CD4-positive, alpha-beta memory T cell (primary cell): ENCODE measurements at regions of chr16 and their contacts with region 1.

Region 1: GRCh38 chr16:25257504-25257955 is at the start of gene ZKSCAN2:
- DNase-seq: peak; percentile 76 to 83 (median 80)
- H3K4me3 ChIP-seq: peak within 1 kb of the TSS; percentile 80 to 84
- H3K4me3 Mint-ChIP-seq: peak within 1 kb of the TSS; percentile 93 to 98 (median 96)
- H3K27ac ChIP-seq: peak within 1 kb of the TSS; percentile 84
- H3K27ac Mint-ChIP-seq: peak within 1 kb of the TSS; percentile 96 to 98 (median 97)
- H3K4me1 ChIP-seq: peaks cover 44% of the 10 kb centered on the region
- H3K4me1 Mint-ChIP-seq: peaks cover 41 to 68% (median 55%) of the 10 kb centered on the region in 4 donors
- H3K27me3 ChIP-seq: no peaks in the 10 kb centered on the region
- H3K27me3 Mint-ChIP-seq: no peaks in the 10 kb centered on the region
- total RNA-seq, gene ZKSCAN2: 3.6 to 4.1 TPM

Region 2: DNA sequence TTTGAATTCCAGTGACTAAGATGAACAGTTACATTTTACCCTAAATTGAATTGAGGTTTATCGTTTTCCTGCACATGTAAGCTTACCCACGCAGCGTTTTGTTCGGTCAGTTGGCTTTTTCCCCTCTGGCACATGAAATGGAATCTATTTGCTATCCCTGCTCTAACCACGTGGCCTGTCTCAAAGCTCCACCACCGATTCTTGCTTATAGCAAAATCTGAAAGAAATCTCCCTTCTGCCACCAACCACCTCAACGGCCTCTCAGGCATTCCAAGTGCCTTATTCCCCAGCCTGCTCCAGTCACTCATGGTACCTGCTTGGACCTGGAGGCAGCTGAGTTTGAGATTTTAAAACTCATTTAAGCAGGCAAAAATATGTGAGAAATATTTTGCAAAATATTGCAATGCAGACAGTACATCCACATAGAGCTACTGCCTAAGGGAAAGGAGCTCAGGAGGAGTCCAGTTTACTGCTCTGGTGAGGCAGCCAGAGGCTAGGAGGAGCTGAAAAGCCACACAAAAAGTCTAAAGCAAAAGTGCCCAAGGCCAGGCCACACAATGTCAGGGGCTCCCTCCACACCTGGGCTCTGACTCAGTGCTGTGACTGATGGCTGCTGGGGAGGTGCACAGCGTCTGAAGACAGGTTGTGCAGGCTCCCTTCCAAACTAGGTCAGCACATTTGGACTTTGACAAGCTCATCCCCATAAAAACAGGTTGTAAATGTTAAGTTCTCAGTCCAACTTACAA is 268.8 kb before region 1 on chr16:
- CTCF ChIA-PET with region 1: no interaction called
- POLR2A ChIA-PET with region 1: no interaction called
- intact Hi-C with region 1: no loop called
- DNase-seq: no peak
- H3K4me3 ChIP-seq: no peak overlapping the region
- H3K4me3 Mint-ChIP-seq: no peak overlapping the region
- H3K27ac ChIP-seq: no peak overlapping the region
- H3K27ac Mint-ChIP-seq: peak overlapping the region in 2 of 7 donors; percentile 30 to 57
- H3K4me1 ChIP-seq: peaks cover 42% of the 10 kb centered on the region
- H3K4me1 Mint-ChIP-seq: peaks cover 46 to 76% (median 65%) of the 10 kb centered on the region in 4 donors
- H3K27me3 ChIP-seq: no peaks in the 10 kb centered on the region
- H3K27me3 Mint-ChIP-seq: no peaks in the 10 kb centered on the region

Region 3: GRCh38 chr16:25270577-25270976 is 13.0 kb after region 1 on chr16:
- CTCF ChIA-PET with region 1: interaction called, 13 read pairs
- POLR2A ChIA-PET with region 1: interaction called, 6 read pairs
- intact Hi-C with region 1: no loop called
- DNase-seq: no peak
- H3K4me3 ChIP-seq: no peak overlapping the region
- H3K4me3 Mint-ChIP-seq: no peak overlapping the region
- H3K27ac ChIP-seq: no peak overlapping the region
- H3K27ac Mint-ChIP-seq: no peak overlapping the region
- H3K4me1 ChIP-seq: no peaks in the 10 kb centered on the region
- H3K4me1 Mint-ChIP-seq: peaks cover 6 to 15% (median 11%) of the 10 kb centered on the region in 4 donors
- H3K27me3 ChIP-seq: no peaks in the 10 kb centered on the region
- H3K27me3 Mint-ChIP-seq: no peaks in the 10 kb centered on the region